T-cell (primary cell): ENCODE measurements at regions of chr4 and their contacts with region 1.

Region 1: DNA sequence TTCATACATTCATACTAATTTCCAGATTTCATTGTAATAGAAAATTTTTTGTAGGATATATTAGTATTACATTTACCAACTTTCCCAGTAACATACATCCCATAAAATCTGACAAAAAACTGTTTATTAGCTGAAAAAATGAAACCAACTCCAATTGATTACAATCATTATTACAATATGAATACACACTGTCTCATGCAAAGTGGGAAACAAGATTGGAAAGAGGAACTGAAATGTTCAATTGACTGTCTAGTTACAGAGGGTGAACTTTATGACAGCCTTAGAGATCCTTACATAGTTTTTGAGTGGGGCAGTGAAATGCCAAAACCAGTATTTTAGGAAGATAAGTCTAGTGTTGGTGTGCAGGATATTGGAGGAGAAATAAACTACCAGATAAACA is 2.3 kb upstream of the AMBN start:
- DNase-seq: no peak
- ATAC-seq: no peak
- H3K4me3 ChIP-seq: no peak overlapping the region
- H3K4me3 Mint-ChIP-seq: no peak overlapping the region
- H3K27ac ChIP-seq: no peak overlapping the region
- H3K27ac Mint-ChIP-seq: no peak overlapping the region
- H3K4me1 ChIP-seq: no peaks in the 10 kb centered on the region
- H3K4me1 Mint-ChIP-seq: peaks cover 0 to 4% (median 2%) of the 10 kb centered on the region in 3 donors
- H3K27me3 ChIP-seq: no peaks in the 10 kb centered on the region
- H3K27me3 Mint-ChIP-seq: no peaks in the 10 kb centered on the region

Region 2: DNA sequence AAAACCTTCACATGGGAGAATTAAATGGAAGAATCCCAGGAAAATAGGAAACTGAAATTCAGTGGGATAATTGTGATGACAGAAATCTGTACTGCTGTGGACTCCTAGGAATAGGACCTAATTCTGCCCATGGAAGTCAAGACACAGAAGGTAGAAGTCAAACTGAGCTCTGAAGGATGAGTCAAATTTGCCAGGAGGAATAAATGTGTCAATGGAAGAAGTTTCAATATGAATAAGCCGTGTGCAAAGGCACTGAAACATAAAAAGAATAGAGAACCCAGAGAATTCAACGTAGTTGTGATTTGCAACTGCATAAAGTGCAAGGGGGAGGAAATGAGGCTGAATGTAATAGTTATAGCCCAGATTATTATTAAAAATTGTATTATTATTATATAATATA is 50.4 kb after region 1 on chr4:
- CTCF ChIA-PET with region 1: no interaction called
- POLR2A ChIA-PET with region 1: interaction called in 1 of 2 experiments, 11 read pairs
- DNase-seq: no peak
- ATAC-seq: no peak
- H3K4me3 ChIP-seq: no peak overlapping the region
- H3K4me3 Mint-ChIP-seq: no peak overlapping the region
- H3K27ac ChIP-seq: no peak overlapping the region
- H3K27ac Mint-ChIP-seq: no peak overlapping the region
- H3K4me1 ChIP-seq: no peaks in the 10 kb centered on the region
- H3K4me1 Mint-ChIP-seq: no peaks in the 10 kb centered on the region
- H3K27me3 ChIP-seq: no peaks in the 10 kb centered on the region
- H3K27me3 Mint-ChIP-seq: peaks cover 0 to 6% of the 10 kb centered on the region in 2 donors

Region 3: DNA sequence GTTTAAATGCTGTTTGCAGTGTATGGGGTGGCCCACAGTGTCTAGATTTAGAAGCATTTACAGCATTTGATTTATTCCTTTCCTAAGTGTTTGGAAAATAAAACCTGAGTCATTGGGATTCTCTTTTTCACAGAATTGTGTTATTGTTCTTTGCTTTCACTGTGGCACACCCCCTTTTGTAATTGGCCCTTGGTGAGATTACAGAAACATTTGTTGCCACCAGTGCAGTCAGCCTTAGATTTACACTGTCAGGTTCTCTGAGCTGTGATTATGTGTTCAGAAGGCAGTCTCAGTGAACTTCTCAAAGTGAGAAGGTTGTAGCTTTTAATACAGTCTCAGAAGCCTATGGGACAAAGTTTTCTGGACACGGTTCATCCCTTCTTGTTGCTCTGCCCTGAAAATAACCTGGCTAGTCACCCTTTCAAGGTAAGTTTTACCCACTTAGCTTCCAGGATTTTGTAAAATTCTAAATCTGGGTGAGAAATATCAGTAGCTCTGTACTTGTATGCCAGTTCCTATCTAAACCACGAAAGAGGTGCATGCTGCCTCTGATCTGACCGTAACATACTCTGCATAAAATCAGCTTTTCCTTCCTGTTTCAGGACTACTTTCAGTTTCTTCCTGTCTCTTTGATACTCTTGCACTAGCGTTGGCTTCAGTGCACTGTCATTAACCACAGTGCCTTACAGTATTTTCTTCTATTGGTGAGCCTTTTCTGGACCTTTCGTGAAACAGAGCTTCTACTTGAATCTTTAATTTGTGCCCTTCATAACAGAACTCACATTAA is 144.6 kb after region 1 on chr4:
- CTCF ChIA-PET with region 1: no interaction called
- POLR2A ChIA-PET with region 1: no interaction called
- DNase-seq: peak in 29 of 35 experiments; percentile 5 to 76 (median 20)
- ATAC-seq: peak; percentile 89 to 94 (median 92)
- H3K4me3 ChIP-seq: peak overlapping the region; percentile 28 to 58
- H3K4me3 Mint-ChIP-seq: peak overlapping the region; percentile 66 to 71 (median 70)
- H3K27ac ChIP-seq: peak overlapping the region; percentile 82
- H3K27ac Mint-ChIP-seq: peak overlapping the region; percentile 93 to 94
- H3K4me1 ChIP-seq: peaks cover 36 to 44% of the 10 kb centered on the region in 2 experiments
- H3K4me1 Mint-ChIP-seq: peaks cover 41 to 61% (median 47%) of the 10 kb centered on the region in 3 donors
- H3K27me3 ChIP-seq: no peaks in the 10 kb centered on the region
- H3K27me3 Mint-ChIP-seq: no peaks in the 10 kb centered on the region

Region 4: DNA sequence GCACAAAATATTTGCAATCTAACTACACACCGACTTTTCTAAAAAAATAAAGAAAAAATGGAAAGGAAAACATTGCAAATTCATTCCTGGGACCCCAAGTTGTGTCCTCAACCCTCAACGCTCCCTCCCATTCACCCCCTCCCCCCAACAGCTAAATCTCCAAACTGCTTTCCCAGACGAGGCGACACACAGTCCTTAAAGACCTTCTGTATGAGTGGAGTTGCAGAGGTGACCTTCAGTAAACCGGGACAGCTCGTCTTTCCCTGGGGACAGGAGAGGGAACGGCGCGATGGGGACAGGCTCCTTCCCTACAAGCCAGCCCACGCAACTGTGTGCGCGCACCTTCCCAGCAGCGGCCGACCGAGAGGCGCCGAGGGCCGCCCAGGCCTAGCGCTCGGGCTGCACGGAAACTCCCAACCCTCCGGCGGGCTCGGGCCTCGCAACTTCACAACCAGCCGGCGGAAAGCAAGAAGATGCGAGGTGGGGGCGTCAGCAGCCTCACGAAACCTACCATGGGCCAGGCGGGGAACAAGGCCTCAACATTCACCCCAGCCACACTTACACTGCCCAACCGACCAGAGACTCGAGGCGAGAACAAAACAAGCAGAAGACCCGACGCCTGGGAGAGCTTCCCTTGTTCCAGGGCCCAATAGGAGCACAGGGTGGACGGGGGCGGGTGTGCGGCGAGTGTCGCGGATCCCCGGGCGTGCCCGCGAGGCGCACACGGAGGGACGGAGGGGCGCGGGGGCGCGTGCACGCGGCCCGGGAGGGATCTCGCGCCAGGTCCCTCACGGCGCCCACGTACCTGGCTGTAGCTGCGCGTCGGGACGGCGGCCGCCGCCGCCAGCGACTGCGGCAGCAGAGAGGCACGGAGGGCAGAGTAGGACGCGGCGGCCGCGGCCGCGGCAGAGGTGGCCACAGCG is 249.1 kb after region 1 on chr4:
- CTCF ChIA-PET with region 1: no interaction called
- POLR2A ChIA-PET with region 1: no interaction called
- DNase-seq: peak; percentile 34 to 79 (median 59)
- ATAC-seq: peak; percentile 56 to 65 (median 60)
- H3K4me3 ChIP-seq: peak overlapping the region; percentile 70 to 76
- H3K4me3 Mint-ChIP-seq: peak overlapping the region; percentile 93 to 97 (median 97)
- H3K27ac ChIP-seq: peak overlapping the region; percentile 74
- H3K27ac Mint-ChIP-seq: peak overlapping the region; percentile 96 to 97
- H3K4me1 ChIP-seq: peaks cover 13 to 32% of the 10 kb centered on the region in 2 experiments
- H3K4me1 Mint-ChIP-seq: peaks cover 21 to 44% (median 27%) of the 10 kb centered on the region in 3 donors
- H3K27me3 ChIP-seq: no peaks in the 10 kb centered on the region
- H3K27me3 Mint-ChIP-seq: no peaks in the 10 kb centered on the region